Left colon (tissue), 2 donors: ENCODE measurements at regions of chr11 and their contacts with region 1.

Region 1: GRCh38 chr11:62269650-62270278 is at the start of gene SCGB2A2:
- DNase-seq: no peak
- ATAC-seq: no peak
- total RNA-seq, gene SCGB2A2: not detected

Region 2: GRCh38 chr11:62217191-62217748 is 52.5 kb before region 1 on chr11:
- intact Hi-C with region 1: loop called in 1 of 2 experiments (anchors 10 kb)
- DNase-seq: no peak
- ATAC-seq: no peak

Region 3: DNA sequence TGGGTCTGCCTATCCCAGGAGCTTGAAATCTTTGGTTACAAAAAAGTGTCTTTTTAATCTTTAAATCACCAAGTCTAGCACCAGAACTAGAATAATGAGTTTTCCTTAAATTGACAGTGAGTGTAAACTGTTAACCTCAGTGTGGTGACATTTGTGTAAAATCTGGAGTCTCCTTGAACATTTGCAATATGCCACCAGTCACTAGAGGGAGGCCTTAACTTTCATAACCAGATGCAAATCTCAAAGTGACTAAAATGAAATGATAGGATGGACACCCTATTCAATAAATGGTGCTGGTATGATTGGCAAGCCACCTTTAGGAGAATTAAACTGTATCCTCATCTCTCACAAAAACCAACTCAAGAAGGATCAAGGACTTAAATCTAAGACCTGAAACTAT is 36.0 kb before region 1 on chr11:
- intact Hi-C with region 1: no loop called
- DNase-seq: no peak
- ATAC-seq: no peak